ENCODE measurements at regions of chr7 and their contacts with region 1.

Region 1: DNA sequence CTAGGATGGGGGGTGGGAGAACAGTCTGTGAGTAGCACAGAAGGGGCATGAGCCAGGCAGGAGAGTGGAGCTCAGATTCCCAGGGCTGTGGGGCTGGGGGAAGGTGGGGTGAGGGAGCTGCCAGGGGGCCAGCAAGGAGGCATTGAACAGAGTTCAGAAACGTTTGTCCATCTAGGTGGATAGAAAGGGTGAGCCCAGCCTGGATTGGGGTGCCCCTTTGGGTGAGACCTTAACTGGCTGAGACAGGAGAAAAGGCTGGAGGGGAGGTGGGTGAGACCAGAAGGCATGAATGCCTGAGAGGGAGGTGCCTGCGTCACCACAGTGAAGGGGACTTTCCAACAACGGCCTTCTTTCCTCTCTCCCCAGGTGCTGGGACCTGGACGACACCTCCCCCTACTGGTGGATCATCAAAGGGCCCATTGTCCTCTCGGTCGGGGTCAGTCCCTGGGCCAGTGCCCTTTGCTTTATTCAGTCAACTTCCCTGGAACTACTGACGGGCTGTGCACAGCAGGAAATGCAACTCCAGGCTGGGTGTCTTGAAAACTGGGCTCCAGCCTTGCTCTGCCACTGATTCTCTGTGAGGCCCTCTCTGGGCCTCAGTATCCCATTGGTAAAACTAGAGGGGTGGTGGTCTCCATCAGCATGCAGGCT is 11.0 kb downstream of the GHRHR start:
- DNase-seq: peak; percentile 80
- H3K4me3 Mint-ChIP-seq: no peak overlapping the region
- H3K27ac Mint-ChIP-seq: no peak overlapping the region
- H3K4me1 Mint-ChIP-seq: peaks cover 2% of the 10 kb centered on the region
- H3K27me3 Mint-ChIP-seq: peaks cover 16% of the 10 kb centered on the region

Region 2: DNA sequence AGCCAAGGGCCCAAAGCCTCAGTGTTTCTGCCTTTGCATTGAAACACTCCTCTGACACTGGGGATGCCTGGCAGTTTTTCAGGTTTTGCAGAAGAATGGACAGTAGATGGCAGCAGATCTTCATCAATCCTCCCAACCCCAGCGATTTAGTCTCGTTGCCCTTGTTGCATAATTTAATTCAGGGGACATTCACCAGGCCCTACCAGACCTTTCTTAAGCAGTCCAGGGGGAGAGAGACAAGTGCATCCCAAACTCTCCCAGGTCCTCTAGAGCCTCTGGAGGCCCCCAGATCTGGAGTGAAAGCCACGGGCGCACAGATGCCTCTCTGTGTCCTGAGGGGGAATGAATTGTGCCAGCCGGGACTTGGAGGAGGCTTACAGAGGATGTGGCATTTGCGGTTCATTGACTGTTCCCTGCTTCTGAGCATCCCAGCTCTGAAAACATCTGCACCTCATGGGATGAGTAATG is 173.9 kb before region 1 on chr7:
- CTCF ChIA-PET with region 1: no interaction called
- POLR2A ChIA-PET with region 1: no interaction called
- intact Hi-C with region 1: loop called (anchors 2 kb)
- DNase-seq: peak; percentile 25
- H3K4me3 Mint-ChIP-seq: no peak overlapping the region
- H3K27ac Mint-ChIP-seq: no peak overlapping the region
- H3K4me1 Mint-ChIP-seq: peaks cover 8% of the 10 kb centered on the region
- H3K27me3 Mint-ChIP-seq: no peaks in the 10 kb centered on the region

Region 3: DNA sequence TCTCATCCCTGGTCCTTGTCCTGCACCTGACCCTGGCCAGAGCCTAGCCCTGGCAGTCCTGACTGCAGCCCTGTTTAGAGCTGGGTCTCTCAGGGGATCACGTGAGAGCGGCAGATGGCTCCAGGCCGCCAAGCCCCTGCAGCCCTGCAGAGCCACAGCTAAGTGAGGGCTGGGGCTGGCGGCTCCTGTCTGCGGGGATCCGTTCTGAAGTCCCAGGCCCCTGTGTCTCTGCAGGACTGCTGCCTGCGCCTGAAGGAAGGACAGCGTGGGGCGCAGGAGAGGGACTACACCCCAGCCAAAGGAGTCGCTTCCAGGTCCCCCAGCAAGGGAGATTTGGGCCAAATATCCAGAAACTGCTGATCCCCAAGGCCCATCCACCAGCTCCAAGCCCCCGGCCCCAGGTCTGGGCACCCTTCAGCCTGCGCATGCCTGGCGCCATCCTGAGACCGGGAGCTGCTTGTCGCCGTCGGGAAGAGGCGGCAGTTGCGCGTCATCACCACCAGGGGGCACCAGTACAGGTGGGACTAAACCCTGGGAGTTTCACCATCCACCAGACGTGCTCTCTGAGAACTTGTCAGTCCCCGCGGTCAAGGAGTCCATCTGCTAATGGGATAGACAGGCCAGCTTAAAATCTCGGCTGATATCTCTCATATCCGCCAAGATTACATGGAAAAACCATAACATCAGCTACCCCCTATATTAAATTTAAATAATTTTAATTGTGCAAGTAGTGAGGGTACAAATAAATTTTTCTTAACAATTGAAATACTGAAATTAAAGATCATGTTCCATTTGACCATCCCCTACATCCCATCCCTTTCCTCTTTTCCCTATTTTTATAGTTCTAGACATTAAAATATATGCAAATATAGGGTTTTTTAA is 36.1 kb before region 1 on chr7:
- CTCF ChIA-PET with region 1: interaction called, 12 read pairs
- POLR2A ChIA-PET with region 1: no interaction called
- intact Hi-C with region 1: loop called (anchors 1 kb)
- DNase-seq: peak; percentile 77
- H3K4me3 Mint-ChIP-seq: no peak overlapping the region
- H3K27ac Mint-ChIP-seq: no peak overlapping the region
- H3K4me1 Mint-ChIP-seq: no peaks in the 10 kb centered on the region
- H3K27me3 Mint-ChIP-seq: peaks cover 15% of the 10 kb centered on the region

Region 4: GRCh38 chr7:30996256-30996655 is 21.5 kb after region 1 on chr7:
- CTCF ChIA-PET with region 1: no interaction called
- POLR2A ChIA-PET with region 1: no interaction called
- intact Hi-C with region 1: no loop called
- DNase-seq: no peak
- H3K4me3 Mint-ChIP-seq: no peak overlapping the region
- H3K27ac Mint-ChIP-seq: no peak overlapping the region
- H3K4me1 Mint-ChIP-seq: no peaks in the 10 kb centered on the region
- H3K27me3 Mint-ChIP-seq: peaks cover 2% of the 10 kb centered on the region

Region 5: GRCh38 chr7:31122649-31123058 is 147.9 kb after region 1 on chr7:
- CTCF ChIA-PET with region 1: interaction called, 297 read pairs
- POLR2A ChIA-PET with region 1: no interaction called
- intact Hi-C with region 1: no loop called
- DNase-seq: peak; percentile 57
- H3K4me3 Mint-ChIP-seq: no peak overlapping the region
- H3K27ac Mint-ChIP-seq: no peak overlapping the region
- H3K4me1 Mint-ChIP-seq: no peaks in the 10 kb centered on the region
- H3K27me3 Mint-ChIP-seq: peaks cover 9% of the 10 kb centered on the region